Endothelial cell of umbilical vein (primary cell): ENCODE measurements at regions of chrX and their contacts with region 1.

Region 1: DNA sequence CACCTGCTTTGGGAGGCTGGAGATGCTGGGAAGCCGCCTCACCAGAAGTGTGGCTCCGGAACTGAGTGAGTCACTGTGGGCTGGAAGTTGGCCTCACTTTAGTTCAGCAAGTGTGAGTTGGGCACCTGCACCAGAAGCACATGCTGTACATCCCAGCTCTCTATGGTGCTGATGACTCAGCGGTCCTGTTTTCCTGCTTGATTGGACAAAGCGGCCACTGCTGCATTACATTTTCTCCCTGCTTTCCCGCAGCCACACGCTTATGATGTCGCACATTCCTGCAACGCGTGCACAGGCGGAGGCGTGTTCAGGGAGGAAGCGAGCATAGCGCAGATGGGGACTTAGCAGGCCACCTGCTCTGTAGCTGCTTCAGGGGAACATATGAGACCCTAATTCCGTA is 26.7 kb upstream of the CLDN34 start:
- DNase-seq: peak; percentile 78
- H3K4me3 ChIP-seq: no peak overlapping the region
- H3K27ac ChIP-seq: peak overlapping the region; percentile 70
- H3K4me1 ChIP-seq: peaks cover 13% of the 10 kb centered on the region
- H3K27me3 ChIP-seq: no peaks in the 10 kb centered on the region
- CTCF ChIP-seq: no peak
- POLR2A ChIP-seq: no peak

Region 2: DNA sequence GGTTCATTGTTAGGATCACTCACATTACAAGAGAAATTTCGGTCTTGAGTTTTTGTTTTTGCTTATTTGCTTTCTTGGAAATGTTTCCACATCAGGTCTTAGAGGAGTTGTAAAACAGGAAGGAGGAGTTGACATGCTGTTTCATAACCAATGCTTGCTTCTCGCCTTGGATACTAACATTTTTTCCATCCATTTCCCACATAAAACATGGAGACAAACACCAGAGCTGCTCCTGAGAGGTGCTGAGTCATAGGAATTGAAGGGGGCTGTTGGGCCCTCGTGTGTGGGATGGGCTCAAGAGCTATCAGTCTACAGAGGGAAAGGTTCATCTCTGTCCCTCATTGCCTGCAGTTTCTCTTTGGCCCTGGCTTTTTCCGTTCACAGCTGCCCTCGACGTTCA is 445.6 kb before region 1 on chrX:
- CTCF ChIA-PET with region 1: no interaction called
- POLR2A ChIA-PET with region 1: no interaction called
- dilution Hi-C with region 1: no loop called
- intact Hi-C with region 1: no loop called
- DNase-seq: no peak
- H3K4me3 ChIP-seq: no peak overlapping the region
- H3K27ac ChIP-seq: no peak overlapping the region
- H3K4me1 ChIP-seq: no peaks in the 10 kb centered on the region
- H3K27me3 ChIP-seq: no peaks in the 10 kb centered on the region
- CTCF ChIP-seq: no peak
- POLR2A ChIP-seq: no peak

Region 3: DNA sequence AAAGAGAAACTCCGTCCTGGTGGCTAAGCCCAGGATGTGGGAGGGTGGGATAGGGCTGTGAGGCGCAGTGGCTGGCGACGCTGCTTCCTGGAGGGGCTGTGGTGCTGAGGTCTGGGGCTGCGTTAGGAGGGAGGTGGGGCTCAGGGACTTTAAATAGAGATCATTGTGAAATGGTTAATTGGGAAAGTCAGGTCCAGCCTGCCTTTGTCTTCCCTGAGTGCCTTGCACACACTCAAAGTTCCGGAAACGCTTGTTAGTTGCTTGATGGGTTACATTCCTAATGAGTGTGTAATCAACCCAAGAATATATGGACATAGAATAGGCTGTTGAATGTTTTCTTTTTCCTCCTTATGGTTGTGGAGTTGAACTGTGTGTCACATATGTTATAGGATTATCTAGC is 28.9 kb before region 1 on chrX:
- CTCF ChIA-PET with region 1: no interaction called
- POLR2A ChIA-PET with region 1: no interaction called
- dilution Hi-C with region 1: no loop called
- intact Hi-C with region 1: loop called (anchors 2 kb)
- DNase-seq: peak; percentile 58
- H3K4me3 ChIP-seq: no peak overlapping the region
- H3K27ac ChIP-seq: peak overlapping the region; percentile 78
- H3K4me1 ChIP-seq: peaks cover 16% of the 10 kb centered on the region
- H3K27me3 ChIP-seq: no peaks in the 10 kb centered on the region
- CTCF ChIP-seq: no peak
- POLR2A ChIP-seq: no peak

Region 4: GRCh38 chrX:9997524-9997923 is 57.1 kb after region 1 on chrX:
- CTCF ChIA-PET with region 1: no interaction called
- POLR2A ChIA-PET with region 1: no interaction called
- dilution Hi-C with region 1: no loop called
- intact Hi-C with region 1: no loop called
- DNase-seq: no peak
- H3K4me3 ChIP-seq: no peak overlapping the region
- H3K27ac ChIP-seq: no peak overlapping the region
- H3K4me1 ChIP-seq: peaks cover 8% of the 10 kb centered on the region
- H3K27me3 ChIP-seq: no peaks in the 10 kb centered on the region
- CTCF ChIP-seq: no peak
- POLR2A ChIP-seq: no peak

Region 5: GRCh38 chrX:10235851-10236250 is 295.4 kb after region 1 on chrX:
- CTCF ChIA-PET with region 1: no interaction called
- POLR2A ChIA-PET with region 1: no interaction called
- dilution Hi-C with region 1: no loop called
- intact Hi-C with region 1: no loop called
- DNase-seq: no peak
- H3K4me3 ChIP-seq: no peak overlapping the region
- H3K27ac ChIP-seq: no peak overlapping the region
- H3K4me1 ChIP-seq: no peaks in the 10 kb centered on the region
- H3K27me3 ChIP-seq: no peaks in the 10 kb centered on the region
- CTCF ChIP-seq: no peak
- POLR2A ChIP-seq: no peak